ENCODE measurements at regions of chr13 and their contacts with region 1.

Region 1: GRCh38 chr13:99214232-99214631 is 13.6 kb downstream of the UBAC2 start:
- DNase-seq: no peak
- H3K4me3 Mint-ChIP-seq: peak overlapping the region; percentile 67
- H3K27ac Mint-ChIP-seq: peak overlapping the region; percentile 93
- H3K4me1 Mint-ChIP-seq: peaks cover 61% of the 10 kb centered on the region
- H3K27me3 Mint-ChIP-seq: no peaks in the 10 kb centered on the region

Region 2: DNA sequence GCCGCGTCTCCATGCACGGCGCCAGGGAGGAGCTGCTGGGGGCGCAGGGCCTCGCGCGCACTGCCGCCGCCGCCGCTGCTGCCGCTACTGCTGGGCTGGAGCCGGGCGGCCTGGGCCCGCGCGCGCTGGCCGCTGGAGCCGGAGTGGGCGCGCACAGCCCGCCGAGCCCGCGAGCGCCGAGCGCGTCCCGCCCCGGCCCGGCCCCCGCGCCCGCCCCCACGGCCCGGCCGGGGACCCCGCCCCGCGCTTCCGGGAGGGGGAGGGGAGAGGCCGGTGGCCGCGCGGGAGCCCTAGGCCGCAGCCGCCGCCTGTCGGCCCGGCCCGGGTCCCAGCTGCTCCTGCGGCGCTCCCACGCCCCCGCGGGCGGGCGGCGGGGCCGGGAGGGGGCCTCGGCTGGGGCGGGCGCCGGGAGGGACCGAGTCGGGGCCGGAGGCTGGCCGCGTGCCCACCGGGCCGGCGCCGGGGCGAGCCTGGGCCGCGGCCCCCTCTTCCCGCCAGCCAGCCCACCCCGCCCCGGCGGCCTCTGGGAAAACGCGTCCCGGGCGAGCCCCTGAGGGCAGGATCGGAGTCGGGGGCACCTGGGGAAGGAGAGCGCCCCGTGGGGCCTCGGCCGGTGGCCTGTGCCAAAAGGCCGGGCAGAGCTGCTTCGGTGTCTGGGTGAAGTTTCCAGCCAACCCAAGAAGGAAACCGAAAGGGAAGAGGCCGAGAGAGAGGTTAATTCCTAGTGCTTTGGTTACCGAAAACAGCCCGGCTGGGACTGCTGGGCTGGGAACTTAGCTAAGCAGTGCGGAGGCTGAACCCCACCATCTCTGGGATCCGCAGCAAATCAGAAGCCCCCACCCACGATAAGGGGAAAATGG is 637.0 kb before region 1 on chr13 and contains the start of gene STK24:
- intact Hi-C with region 1: loop called (anchors 10 kb)
- DNase-seq: peak; percentile 60
- H3K4me3 Mint-ChIP-seq: peak within 1 kb of the TSS; percentile 98
- H3K27ac Mint-ChIP-seq: peak within 1 kb of the TSS; percentile 95
- H3K4me1 Mint-ChIP-seq: peaks cover 36% of the 10 kb centered on the region
- H3K27me3 Mint-ChIP-seq: no peaks in the 10 kb centered on the region
- total RNA-seq, gene STK24: 119 and 127 TPM in 2 replicates

Region 3: DNA sequence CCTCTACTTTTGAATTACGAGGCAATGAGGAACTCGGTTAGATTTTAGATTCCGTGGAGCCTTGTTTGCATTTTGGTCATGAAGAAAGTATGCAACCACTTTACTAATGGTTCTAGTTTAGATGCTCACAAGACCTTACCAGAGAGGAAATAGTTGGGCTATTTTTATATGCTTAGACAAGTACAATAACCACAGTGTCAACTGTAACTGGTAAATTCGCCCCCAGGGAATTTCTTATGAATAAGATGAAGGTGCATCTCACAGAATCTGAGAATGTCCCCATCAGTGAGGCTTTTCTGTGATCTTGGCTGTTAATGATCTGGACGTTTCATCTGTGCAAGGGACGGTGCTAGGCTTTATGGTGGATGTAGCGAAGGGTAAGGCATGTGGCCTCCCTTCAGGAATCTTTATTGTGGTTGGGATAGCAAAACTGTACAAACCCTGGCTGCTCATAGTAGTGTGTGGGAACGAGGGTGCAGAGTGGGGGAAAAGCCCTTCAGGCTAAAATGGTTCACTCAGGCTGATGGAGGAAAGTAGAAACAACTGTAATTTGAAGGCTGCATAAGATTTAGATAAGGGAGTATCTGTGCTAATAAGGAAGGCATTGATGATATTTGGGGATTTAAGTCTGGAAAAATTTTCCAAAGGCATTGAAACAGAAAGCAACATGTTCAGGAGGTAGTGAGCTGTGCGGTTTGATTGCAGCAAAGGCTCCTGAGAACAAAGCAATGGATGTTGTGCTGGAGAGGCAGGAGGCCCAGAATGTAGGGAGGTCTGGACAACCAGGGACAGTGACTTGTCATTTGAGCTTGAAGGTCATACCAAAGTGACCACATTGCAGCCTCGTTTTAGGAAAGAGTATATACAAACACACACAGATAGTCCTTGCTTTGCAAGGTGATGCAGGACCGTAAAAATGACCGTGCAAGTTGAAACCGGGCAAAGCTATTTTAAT is 14.8 kb after region 1 on chr13:
- intact Hi-C with region 1: loop called (anchors 1 kb)
- DNase-seq: no peak
- H3K4me3 Mint-ChIP-seq: peak overlapping the region; percentile 66
- H3K27ac Mint-ChIP-seq: peak overlapping the region; percentile 94
- H3K4me1 Mint-ChIP-seq: peaks cover 54% of the 10 kb centered on the region
- H3K27me3 Mint-ChIP-seq: no peaks in the 10 kb centered on the region

Region 4: GRCh38 chr13:99250982-99251825 is 37.0 kb after region 1 on chr13:
- intact Hi-C with region 1: loop called (anchors 1 kb)
- DNase-seq: no peak
- H3K4me3 Mint-ChIP-seq: no peak overlapping the region
- H3K27ac Mint-ChIP-seq: peak overlapping the region; percentile 34
- H3K4me1 Mint-ChIP-seq: peaks cover 47% of the 10 kb centered on the region
- H3K27me3 Mint-ChIP-seq: no peaks in the 10 kb centered on the region

Region 5: GRCh38 chr13:99288089-99288488 is 73.9 kb after region 1 on chr13:
- intact Hi-C with region 1: loop called (anchors 2 kb)
- DNase-seq: peak; percentile 38
- H3K4me3 Mint-ChIP-seq: peak overlapping the region; percentile 3
- H3K27ac Mint-ChIP-seq: peak overlapping the region; percentile 80
- H3K4me1 Mint-ChIP-seq: peaks cover 75% of the 10 kb centered on the region
- H3K27me3 Mint-ChIP-seq: no peaks in the 10 kb centered on the region

Region 6: GRCh38 chr13:100392709-100393641 is 1178.7 kb after region 1 on chr13:
- intact Hi-C with region 1: loop called (anchors 5 kb)
- DNase-seq: peak; percentile 41
- H3K4me3 Mint-ChIP-seq: peak overlapping the region; percentile 11
- H3K27ac Mint-ChIP-seq: peak overlapping the region; percentile 67
- H3K4me1 Mint-ChIP-seq: peaks cover 30% of the 10 kb centered on the region
- H3K27me3 Mint-ChIP-seq: no peaks in the 10 kb centered on the region